Heart right ventricle (tissue), 16 donors: ENCODE measurements at regions of chr2 and their contacts with region 1.

Region 1: GRCh38 chr2:61016808-61017555 is 538 bp upstream of the PEX13 start:
- DNase-seq: peak; percentile 56 to 70
- ATAC-seq: peak; percentile 81 to 92 (median 89)
- H3K4me3 ChIP-seq: peak overlapping the region; percentile 59 to 97 (median 91)
- H3K27ac ChIP-seq: peak overlapping the region; percentile 65 to 93 (median 92)
- H3K4me1 ChIP-seq: peaks cover 0 to 48% (median 29%) of the 10 kb centered on the region in 9 donors
- H3K27me3 ChIP-seq: no peaks in the 10 kb centered on the region
- CTCF ChIP-seq: no peak

Region 2: DNA sequence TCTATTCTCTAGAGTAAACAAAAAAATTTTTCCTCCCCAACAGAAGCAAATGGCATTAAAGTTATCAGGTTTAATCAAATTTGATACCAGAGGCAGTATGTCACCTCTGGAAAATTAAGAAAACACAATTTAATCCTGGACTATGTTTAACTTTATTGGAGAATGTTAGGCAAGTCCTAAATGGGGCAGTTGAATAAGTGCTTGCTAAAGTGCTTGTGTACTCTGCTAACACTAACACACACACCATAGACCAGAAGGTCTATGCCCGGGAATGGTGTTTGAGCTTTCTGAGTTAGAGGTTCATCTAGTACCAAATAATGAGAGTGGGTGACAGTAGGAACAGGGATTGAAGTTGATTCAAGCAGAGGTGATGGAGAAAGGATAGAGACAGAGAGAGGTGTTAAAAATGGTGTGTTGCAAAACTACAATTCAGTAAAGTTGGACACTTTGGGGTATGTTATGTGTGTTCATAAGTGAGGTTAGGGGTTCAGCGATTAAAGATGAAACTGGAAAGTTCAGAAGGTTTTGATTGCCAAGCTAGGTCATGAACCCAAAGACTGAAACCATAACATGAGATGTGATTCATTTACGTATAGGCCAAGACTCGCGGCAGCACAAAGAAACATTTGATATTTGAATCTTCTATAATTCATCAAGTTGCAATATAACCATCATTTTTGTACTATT is 40.0 kb before region 1 on chr2:
- intact Hi-C with region 1: no loop called
- DNase-seq: no peak
- ATAC-seq: no peak
- H3K4me3 ChIP-seq: no peak overlapping the region
- H3K27ac ChIP-seq: no peak overlapping the region
- H3K4me1 ChIP-seq: no peaks in the 10 kb centered on the region
- H3K27me3 ChIP-seq: no peaks in the 10 kb centered on the region
- CTCF ChIP-seq: no peak

Region 3: DNA sequence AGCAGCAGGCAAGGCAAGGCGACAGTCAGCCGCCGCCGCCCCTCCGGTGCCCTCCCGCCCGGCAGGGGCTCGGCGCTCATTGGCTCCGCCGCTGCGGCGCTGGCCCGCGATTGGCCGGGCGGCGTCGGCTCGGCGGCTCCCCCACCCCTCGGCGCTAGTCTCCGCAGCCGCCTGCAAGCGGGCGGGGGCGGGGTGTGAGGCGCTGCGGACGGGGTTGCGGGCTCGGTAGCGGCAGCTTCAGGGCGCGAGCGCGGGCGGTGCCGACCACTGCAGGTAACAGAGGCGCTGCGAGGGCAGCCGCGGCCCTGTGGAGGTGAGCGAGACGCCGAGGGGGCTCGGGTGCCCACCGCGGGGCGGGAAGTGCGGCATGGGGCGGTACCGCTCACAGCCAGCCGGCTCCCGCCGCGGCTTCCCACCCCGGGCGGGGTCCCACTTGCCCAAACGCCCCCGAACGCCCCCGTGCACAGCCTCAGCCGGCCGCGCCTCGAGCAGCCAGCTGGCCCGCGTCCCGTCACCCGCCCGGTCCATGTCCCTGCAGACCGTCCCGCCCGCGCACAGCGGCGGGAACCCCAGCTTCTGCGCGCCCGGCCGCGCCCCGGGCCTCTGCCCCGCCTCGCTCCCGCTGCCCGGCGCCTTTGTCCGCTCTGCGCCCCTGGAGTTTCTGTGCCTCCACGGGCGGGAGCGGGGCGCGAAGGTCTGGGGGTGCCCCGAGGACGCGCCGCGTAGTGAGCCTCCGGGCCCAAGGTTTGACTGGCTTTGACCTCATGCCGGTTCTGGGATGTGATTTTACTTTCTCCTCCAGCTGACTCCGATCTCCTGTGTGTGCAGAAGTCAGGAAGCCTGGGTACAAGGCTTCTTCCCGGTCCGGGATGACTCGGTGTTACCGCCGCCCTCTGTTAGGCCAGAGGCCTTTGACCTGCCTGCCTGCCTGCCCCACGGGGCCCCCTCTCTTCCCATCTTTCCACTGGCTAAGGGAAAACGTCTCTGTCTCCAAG is 49.0 kb after region 1 on chr2 and contains the start of gene SANBR:
- intact Hi-C with region 1: loop called in 3 of 10 experiments (anchors 5 kb)
- DNase-seq: peak; percentile 85 to 88
- ATAC-seq: peak; percentile 98 to 99 (median 98)
- H3K4me3 ChIP-seq: peak within 1 kb of the TSS; percentile 73 to 98 (median 88)
- H3K27ac ChIP-seq: peak within 1 kb of the TSS; percentile 48 to 92 (median 87)
- H3K4me1 ChIP-seq: peaks cover 0 to 15% (median 8%) of the 10 kb centered on the region in 9 donors
- H3K27me3 ChIP-seq: no peaks in the 10 kb centered on the region
- CTCF ChIP-seq: peak in 1 of 9 donors; percentile 37
- total RNA-seq, gene SANBR: 5.3 to 9.2 (median 6.6) TPM